CD8-positive, alpha-beta T cell (primary cell): ENCODE measurements at regions of chr4 and their contacts with region 1.

Region 1: DNA sequence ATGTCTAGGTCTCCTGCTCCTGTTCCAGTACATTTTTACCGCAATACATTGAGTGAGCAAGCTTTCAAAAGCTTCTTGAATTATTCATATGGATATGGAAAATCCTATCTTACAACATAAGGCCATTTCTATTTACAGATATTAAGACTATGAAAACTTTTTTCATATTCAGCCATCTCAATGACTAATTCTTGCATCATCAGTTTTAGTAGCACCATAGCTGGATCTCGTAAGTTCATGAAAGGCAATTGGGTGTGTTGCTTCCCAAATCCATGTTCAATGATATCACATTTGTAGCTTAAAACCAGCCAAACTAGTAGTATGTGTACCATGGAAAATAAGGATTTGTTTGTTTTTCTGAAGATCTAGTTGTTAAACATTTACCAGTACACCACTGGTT is 118.3 kb upstream of the GABRA2 start:
- DNase-seq: no peak
- ATAC-seq: no peak
- H3K4me3 ChIP-seq: no peak overlapping the region
- H3K4me3 Mint-ChIP-seq: no peak overlapping the region
- H3K27ac ChIP-seq: no peak overlapping the region
- H3K27ac Mint-ChIP-seq: no peak overlapping the region
- H3K4me1 ChIP-seq: no peaks in the 10 kb centered on the region
- H3K4me1 Mint-ChIP-seq: no peaks in the 10 kb centered on the region
- H3K27me3 ChIP-seq: no peaks in the 10 kb centered on the region
- H3K27me3 Mint-ChIP-seq: no peaks in the 10 kb centered on the region
- CTCF ChIP-seq: no peak

Region 2: DNA sequence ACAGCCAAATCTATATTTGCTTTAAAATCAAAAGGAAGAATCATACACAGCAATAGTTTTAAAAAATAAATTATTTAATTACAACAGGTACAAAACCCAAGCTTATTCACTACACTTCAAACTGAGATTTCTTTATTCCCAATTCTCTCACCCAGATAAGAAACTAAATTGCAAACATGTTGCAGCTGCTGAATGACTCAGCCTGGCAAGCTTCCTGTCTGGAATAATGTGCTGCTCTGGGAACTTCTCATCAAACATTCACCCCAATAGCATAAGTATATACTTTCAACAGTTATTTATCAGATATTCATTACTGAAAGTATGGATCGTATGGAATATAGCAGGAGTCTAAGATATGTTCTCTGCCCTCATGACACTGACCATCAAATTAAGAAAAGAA is 75.3 kb before region 1 on chr4:
- CTCF ChIA-PET with region 1: no interaction called
- POLR2A ChIA-PET with region 1: no interaction called
- intact Hi-C with region 1: no loop called
- DNase-seq: no peak
- ATAC-seq: no peak
- H3K4me3 ChIP-seq: no peak overlapping the region
- H3K4me3 Mint-ChIP-seq: no peak overlapping the region
- H3K27ac ChIP-seq: no peak overlapping the region
- H3K27ac Mint-ChIP-seq: no peak overlapping the region
- H3K4me1 ChIP-seq: no peaks in the 10 kb centered on the region
- H3K4me1 Mint-ChIP-seq: no peaks in the 10 kb centered on the region
- H3K27me3 ChIP-seq: no peaks in the 10 kb centered on the region
- H3K27me3 Mint-ChIP-seq: no peaks in the 10 kb centered on the region
- CTCF ChIP-seq: no peak

Region 3: DNA sequence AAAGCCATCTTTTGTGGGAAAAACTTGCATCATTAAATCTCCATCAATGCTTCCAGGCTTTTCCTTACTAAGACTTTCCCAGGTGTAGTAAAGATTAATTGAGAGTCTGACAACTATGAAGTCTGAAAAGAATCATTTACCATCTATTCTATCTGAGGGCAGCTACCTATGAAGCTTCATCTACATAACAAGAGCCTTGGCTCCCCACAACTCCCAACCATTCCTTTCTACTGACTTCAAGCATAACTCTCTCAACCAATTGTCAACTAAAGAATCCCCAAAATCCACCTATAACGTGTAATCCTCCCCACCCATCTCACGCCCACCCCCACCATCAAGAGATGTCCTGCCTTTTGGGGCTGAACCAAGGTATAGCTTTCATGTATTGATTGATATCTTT is 16.8 kb before region 1 on chr4:
- CTCF ChIA-PET with region 1: no interaction called
- POLR2A ChIA-PET with region 1: interaction called, 3 read pairs
- intact Hi-C with region 1: loop called in 1 of 2 experiments (anchors 1 kb)
- DNase-seq: no peak
- ATAC-seq: no peak
- H3K4me3 ChIP-seq: no peak overlapping the region
- H3K4me3 Mint-ChIP-seq: no peak overlapping the region
- H3K27ac ChIP-seq: no peak overlapping the region
- H3K27ac Mint-ChIP-seq: no peak overlapping the region
- H3K4me1 ChIP-seq: no peaks in the 10 kb centered on the region
- H3K4me1 Mint-ChIP-seq: no peaks in the 10 kb centered on the region
- H3K27me3 ChIP-seq: no peaks in the 10 kb centered on the region
- H3K27me3 Mint-ChIP-seq: no peaks in the 10 kb centered on the region
- CTCF ChIP-seq: no peak